ENCODE measurements at regions of chr2 and their contacts with region 1.

Region 1: GRCh38 chr2:201118121-201118960 is 2.4 kb downstream of the CFLAR start:
- DNase-seq: peak; percentile 68 to 90 (median 78)
- ATAC-seq: peak; percentile 55 to 60
- H3K4me3 Mint-ChIP-seq: peak overlapping the region; percentile 89 to 100 (median 98)
- H3K27ac Mint-ChIP-seq: peak overlapping the region; percentile 97 to 100 (median 99)
- H3K4me1 Mint-ChIP-seq: peaks cover 38 to 79% (median 63%) of the 10 kb centered on the region in 4 donors
- H3K27me3 Mint-ChIP-seq: no peaks in the 10 kb centered on the region

Region 2: DNA sequence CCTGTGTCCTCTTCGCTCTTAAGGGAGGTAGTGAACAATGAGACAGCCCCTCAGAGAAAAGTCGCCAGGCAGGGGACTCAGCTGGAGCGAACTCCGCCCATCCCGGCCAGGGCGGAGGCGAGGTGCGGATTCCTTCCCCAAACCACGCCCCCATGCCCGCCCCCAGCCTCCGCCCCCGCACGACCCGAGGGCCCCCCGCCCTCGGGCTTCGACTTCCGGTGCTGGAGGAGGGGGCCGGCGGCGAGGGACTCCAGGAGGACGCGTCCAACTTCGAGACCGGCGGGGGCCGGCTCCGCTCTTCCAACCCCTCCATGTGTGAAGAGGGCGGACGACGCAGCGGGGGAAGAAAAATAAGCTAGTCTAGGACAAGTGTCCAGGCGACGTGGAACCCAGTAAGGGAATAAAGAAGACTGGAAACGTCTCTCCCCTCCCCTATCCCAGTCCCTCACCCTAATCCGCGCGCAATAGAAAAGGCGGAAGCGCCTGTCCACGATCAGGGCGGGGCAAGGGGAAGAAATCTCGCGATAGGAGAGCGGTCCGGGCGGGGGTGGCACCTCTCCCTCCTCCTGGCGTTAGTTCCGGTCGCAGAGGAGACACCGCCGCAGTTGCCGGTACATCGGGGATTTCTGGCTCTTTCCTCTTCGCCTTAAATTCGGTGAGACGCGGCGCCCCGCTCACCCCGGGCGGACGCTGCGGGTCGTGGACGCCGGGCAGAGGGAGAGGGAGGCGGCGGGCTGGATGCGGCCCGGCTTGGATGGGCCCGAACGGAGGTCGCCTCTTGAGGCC is 306.8 kb before region 1 on chr2 and contains the start of gene BZW1:
- POLR2A ChIA-PET with region 1: interaction called, 10 read pairs
- DNase-seq: peak; percentile 95 to 99 (median 98)
- ATAC-seq: peak; percentile 78 to 85
- H3K4me3 Mint-ChIP-seq: peak within 1 kb of the TSS; percentile 95 to 99 (median 98)
- H3K27ac Mint-ChIP-seq: peak within 1 kb of the TSS; percentile 94 to 99 (median 99)
- H3K4me1 Mint-ChIP-seq: peaks cover 26 to 52% (median 46%) of the 10 kb centered on the region in 4 donors
- H3K27me3 Mint-ChIP-seq: no peaks in the 10 kb centered on the region
- polyA plus RNA-seq, gene BZW1: 222 to 285 (median 243) TPM

Region 3: DNA sequence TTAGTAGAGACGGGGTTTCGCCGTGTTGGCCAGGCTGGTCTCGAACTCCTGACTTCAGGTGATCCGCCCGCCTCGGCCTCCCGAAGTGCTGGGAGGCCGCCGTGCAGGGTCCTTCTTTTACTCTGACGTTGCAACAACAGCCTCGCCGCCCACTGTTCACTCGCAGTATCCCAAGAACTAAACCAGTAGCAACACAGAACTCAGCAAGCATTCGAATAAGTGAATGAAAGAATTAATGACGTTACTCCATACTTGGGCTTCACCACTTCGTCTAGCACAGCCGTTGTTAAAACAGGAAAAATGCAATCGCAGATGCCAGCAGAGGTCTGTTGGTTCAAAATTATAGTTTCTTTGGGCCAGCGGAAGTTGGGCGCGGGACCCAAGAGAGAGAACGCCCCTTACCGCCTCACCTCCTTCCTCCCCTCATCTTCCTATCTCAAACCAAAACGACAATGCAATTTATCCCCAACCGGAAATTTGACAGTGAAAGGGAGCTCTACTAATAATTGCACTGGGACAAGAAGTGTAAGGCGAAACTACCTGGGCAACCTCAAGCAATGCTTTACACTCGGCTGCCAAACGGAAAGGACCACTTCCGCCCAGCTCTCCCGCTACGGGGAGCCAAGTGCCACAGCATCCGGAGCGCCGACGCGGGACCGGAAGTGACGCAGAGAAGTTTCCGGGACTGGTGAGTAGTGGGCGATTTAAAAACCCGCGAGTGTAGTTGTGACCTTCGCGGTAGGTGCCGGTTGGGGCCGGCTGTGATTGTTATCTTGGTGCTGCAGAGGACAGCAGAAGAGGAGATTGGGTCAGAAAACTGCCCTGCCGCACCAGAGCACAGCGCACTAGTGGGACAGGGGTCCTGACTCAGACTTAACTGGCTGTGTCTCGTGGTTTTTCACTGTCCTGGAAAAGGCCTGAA is 229.4 kb before region 1 on chr2 and contains the starts of genes NIF3L1 and PPIL3:
- POLR2A ChIA-PET with region 1: interaction called, 22 read pairs
- DNase-seq: peak; percentile 86 to 98 (median 96)
- ATAC-seq: peak; percentile 79 to 80
- H3K4me3 Mint-ChIP-seq: peak within 1 kb of the TSS; percentile 90 to 99 (median 96)
- H3K27ac Mint-ChIP-seq: peak within 1 kb of the TSS; percentile 94 to 100 (median 98)
- H3K4me1 Mint-ChIP-seq: peaks cover 28 to 64% (median 55%) of the 10 kb centered on the region in 4 donors
- H3K27me3 Mint-ChIP-seq: no peaks in the 10 kb centered on the region
- polyA plus RNA-seq, gene NIF3L1: 15.6 to 24.0 (median 18.7) TPM
- polyA plus RNA-seq, gene PPIL3: 22.3 to 38.3 (median 29.6) TPM

Region 4: DNA sequence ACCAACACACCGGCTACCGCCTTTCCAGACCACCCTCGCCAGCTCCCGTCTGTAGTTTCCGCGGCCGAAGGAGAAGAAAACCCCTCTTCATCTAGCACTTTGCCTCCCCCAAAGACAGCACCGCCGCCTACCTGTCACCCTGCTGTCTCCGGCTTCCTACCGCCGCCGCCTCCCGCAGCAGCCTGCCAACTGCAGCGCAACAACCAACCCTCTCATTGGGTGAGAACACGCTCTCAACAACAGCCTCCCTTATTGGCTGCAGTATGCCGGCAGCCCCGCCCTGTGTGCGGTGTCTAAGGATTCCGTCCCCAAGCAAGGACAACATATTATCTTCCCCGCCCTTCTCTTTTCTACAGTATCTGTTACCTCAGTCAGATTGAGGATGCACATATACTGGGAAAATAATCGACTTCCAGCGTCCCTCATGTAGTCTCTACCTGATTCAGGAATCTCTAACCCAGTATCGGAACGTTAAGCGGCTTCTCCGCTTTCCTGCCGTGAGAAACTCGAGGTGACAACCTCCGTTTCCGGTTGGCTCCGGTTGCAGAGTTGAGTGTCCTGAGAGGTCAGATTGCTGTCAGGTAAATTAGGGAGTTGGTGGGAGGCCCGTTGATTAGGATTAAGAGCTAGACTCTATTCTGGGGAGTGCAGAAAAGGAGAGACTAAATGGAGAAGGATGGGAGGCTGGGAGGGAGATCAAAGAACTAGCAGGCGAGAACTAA is 46.7 kb before region 1 on chr2 and contains the starts of genes HYCC2 and NDUFB3:
- POLR2A ChIA-PET with region 1: interaction called, 75 read pairs
- DNase-seq: peak; percentile 84 to 97 (median 94)
- ATAC-seq: peak; percentile 93 to 94
- H3K4me3 Mint-ChIP-seq: peak within 1 kb of the TSS; percentile 93 to 99 (median 96)
- H3K27ac Mint-ChIP-seq: peak within 1 kb of the TSS; percentile 94 to 99 (median 98)
- H3K4me1 Mint-ChIP-seq: peaks cover 25 to 58% (median 50%) of the 10 kb centered on the region in 4 donors
- H3K27me3 Mint-ChIP-seq: peaks cover 0 to 2% (median 0%) of the 10 kb centered on the region in 5 donors
- polyA plus RNA-seq, gene HYCC2: 20.8 to 32.5 (median 23.0) TPM
- polyA plus RNA-seq, gene NDUFB3: 279 to 299 (median 298) TPM

Region 5: DNA sequence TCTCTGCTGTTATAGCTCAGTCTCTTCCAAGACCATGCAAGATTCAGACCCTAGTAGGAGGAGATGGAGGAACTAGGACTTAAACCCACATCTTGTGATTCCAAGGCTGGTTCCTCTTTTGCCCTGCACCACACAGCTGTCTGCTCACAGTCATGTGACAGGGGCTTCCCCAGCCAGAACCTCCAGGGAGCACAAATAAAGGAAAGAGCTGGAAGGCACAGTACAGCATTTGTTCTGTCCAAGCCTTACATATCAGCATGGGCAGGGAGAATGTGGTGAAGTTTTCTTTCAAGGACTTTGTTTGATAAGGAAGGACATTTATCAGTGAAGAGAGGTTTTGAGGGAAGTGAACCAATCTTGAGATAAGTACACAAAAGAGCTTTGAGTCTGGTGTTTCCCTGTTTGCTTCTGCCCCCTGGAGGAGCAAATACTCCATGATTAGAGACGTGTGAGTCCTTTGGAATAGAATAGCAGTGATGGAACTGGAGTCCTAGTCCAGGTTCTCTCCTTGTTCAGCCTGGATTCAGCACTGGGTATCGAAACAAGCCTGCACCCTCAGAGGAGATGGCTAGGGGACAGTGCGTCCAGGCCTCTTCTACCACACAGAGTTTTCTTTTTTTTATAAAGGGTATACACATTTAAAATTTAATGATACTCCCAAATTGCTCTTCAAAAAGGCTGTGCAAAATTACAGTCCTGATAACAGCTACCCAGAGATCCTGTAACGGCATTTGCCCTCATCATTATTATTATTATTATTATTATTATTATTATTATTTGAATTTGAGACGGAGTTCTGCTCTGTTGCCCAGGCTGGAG is 40.0 kb after region 1 on chr2:
- POLR2A ChIA-PET with region 1: interaction called, 65 read pairs
- DNase-seq: peak in 9 of 10 donors; percentile 36 to 81 (median 63)
- ATAC-seq: peak; percentile 92 to 94
- H3K4me3 Mint-ChIP-seq: peak overlapping the region in 2 of 10 donors; percentile 27 to 64
- H3K27ac Mint-ChIP-seq: peak overlapping the region; percentile 49 to 92 (median 88)
- H3K4me1 Mint-ChIP-seq: peaks cover 8 to 43% (median 10%) of the 10 kb centered on the region in 4 donors
- H3K27me3 Mint-ChIP-seq: no peaks in the 10 kb centered on the region

Region 6: GRCh38 chr2:201194097-201194496 is 75.8 kb after region 1 on chr2:
- POLR2A ChIA-PET with region 1: interaction called, 10 read pairs
- DNase-seq: peak in 3 of 10 donors; percentile 24 to 38 (median 34)
- ATAC-seq: peak; percentile 27 to 61
- H3K4me3 Mint-ChIP-seq: peak overlapping the region; percentile 21 to 81 (median 74)
- H3K27ac Mint-ChIP-seq: peak overlapping the region; percentile 70 to 95 (median 88)
- H3K4me1 Mint-ChIP-seq: peaks cover 28 to 84% (median 70%) of the 10 kb centered on the region in 4 donors
- H3K27me3 Mint-ChIP-seq: no peaks in the 10 kb centered on the region

Region 7: DNA sequence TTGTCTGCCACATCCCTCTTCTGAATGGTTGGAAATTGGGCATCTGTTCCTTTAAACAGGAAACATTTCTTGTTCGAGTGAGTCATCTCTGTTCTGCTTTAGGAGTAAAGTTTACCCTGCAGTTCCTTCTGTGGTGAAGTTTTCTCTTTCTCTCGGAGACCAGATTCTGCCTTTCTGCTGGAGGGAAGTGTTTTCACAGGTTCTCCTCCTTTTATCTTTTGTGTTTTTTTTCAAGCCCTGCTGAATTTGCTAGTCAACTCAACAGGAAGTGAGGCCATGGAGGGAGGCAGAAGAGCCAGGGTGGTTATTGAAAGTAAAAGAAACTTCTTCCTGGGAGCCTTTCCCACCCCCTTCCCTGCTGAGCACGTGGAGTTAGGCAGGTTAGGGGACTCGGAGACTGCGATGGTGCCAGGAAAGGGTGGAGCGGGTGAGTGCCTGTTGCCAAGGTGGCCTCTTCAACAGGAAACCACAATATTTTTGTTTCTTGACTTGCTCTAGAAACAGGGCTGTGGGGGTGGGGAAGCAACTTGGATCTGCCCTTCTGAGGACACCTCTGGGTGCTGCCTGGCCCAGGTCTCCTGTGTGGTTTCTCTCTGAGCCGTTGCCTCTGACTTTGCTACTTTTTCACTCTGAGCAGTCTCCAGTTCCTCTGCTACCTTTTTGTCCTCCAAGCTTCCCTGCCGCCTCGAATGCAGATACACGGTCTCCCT is 139.8 kb after region 1 on chr2:
- POLR2A ChIA-PET with region 1: interaction called, 13 read pairs
- DNase-seq: peak; percentile 70 to 100 (median 96)
- ATAC-seq: peak; percentile 69 to 77
- H3K4me3 Mint-ChIP-seq: peak overlapping the region; percentile 83 to 100 (median 92)
- H3K27ac Mint-ChIP-seq: peak overlapping the region; percentile 92 to 100 (median 99)
- H3K4me1 Mint-ChIP-seq: peaks cover 40 to 85% (median 77%) of the 10 kb centered on the region in 4 donors
- H3K27me3 Mint-ChIP-seq: peaks cover 0 to 1% (median 0%) of the 10 kb centered on the region in 5 donors